Heart left ventricle (tissue), 16 donors: ENCODE measurements at regions of chr17 and their contacts with region 1.

Region 1: GRCh38 chr17:27455914-27456680 is at the start of gene KSR1:
- DNase-seq: peak; percentile 80 to 90 (median 84)
- ATAC-seq: peak; percentile 63 to 96 (median 90)
- H3K4me3 ChIP-seq: peak within 1 kb of the TSS; percentile 73 to 92 (median 82)
- H3K27ac ChIP-seq: peak within 1 kb of the TSS; percentile 59 to 89 (median 77)
- H3K4me1 ChIP-seq: peaks cover 0 to 36% (median 12%) of the 10 kb centered on the region in 12 donors
- H3K27me3 ChIP-seq: no peaks in the 10 kb centered on the region
- CTCF ChIP-seq: peak; percentile 22 to 68 (median 48)
- POLR2A ChIP-seq: peak in 1 of 2 donors; percentile 73
- total RNA-seq, gene KSR1: 6.1 to 31.1 (median 7.5) TPM

Region 2: DNA sequence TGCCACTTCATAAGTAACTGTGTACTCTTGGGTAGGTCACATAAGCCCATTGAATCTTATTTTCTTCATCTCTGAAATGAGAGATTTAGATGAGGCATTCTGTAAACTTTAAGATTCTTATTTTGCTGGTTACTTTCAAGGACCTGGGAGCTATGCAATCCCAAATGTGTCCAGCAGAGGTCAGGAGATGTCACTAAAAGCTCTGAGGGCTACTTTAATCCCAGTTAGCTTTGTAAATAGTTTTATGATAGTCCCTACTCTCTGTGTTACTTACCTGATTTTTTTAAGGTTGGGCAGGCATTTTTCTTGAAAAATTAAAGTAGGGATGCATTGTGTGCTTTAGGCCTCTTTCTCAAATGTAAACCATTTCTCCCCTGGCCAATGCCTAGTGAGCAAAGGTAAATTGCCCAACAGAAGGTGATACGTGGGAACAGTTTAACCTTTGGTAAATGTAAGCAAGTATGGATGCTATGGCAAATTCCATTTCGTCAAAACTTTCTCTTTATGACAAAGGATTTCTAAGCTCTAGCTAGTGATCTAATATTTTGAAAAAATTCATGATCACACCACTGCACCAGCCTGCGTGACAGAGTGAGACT is 219.3 kb before region 1 on chr17:
- intact Hi-C with region 1: loop called in 4 of 10 experiments (anchors 5 to 10 kb)
- DNase-seq: peak in 4 of 5 donors; percentile 60 to 81 (median 63)
- ATAC-seq: peak; percentile 41 to 81 (median 67)
- H3K4me3 ChIP-seq: no peak overlapping the region
- H3K27ac ChIP-seq: no peak overlapping the region
- H3K4me1 ChIP-seq: peaks cover 0 to 59% (median 0%) of the 10 kb centered on the region in 12 donors
- H3K27me3 ChIP-seq: no peaks in the 10 kb centered on the region
- CTCF ChIP-seq: peak; percentile 88 to 98 (median 94)
- POLR2A ChIP-seq: no peak

Region 3: GRCh38 chr17:27353461-27354050 is 102.5 kb before region 1 on chr17:
- intact Hi-C with region 1: loop called in 4 of 10 experiments (anchors 5 to 10 kb)
- DNase-seq: peak; percentile 95 to 97 (median 95)
- ATAC-seq: peak; percentile 92 to 97 (median 94)
- H3K4me3 ChIP-seq: peak overlapping the region; percentile 46 to 90 (median 66)
- H3K27ac ChIP-seq: peak overlapping the region; percentile 80 to 99 (median 96)
- H3K4me1 ChIP-seq: peaks cover 0 to 32% (median 21%) of the 10 kb centered on the region in 12 donors
- H3K27me3 ChIP-seq: no peaks in the 10 kb centered on the region
- CTCF ChIP-seq: peak; percentile 64 to 99 (median 98)
- POLR2A ChIP-seq: peak in 1 of 2 donors; percentile 81

Region 4: DNA sequence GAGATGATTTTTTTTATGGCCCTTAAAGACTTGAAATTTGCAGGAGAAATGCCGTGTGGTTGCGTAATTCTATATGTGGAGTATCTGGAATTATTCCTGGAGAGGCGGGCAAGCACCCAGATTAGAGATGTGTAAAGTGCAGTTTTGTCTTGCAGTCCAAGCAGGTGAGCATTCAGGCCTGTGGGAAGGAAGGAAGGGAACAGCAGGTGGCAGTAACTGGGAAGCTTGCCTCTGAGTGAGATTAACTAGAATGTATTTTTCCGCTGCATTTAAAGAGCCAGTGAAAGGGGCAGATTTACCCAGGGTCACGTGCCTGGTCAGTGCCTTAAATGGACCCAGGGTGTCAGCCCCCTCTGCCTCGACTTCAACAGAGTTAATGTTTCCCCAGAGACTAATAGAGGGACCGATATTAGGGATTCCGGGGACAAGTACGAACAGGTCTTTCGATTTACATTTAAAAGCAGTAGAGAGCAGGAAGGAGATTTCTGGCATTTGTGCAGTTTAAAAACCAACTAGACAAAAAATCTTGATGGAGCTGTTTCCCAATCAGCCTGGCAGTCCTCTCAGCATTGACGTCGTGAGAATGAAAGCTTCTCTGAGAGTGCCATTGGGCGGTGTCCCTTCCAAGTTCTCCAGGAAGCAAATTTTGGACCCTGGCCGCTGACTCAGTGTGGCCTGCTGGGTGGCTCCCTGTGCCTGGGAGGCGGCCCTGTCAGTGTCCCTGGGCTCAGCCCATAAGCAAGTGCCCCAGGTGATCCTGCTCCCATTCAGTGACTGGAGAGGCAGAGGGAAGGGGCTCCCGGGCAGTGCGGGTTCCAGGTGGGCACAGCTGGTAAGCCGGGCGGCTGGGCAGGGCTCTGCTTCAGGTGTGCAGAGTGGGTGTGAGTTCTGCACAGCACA is 38.3 kb after region 1 on chr17:
- intact Hi-C with region 1: loop called in 2 of 10 experiments (anchors 2 to 5 kb)
- DNase-seq: peak; percentile 21 to 79 (median 66)
- ATAC-seq: peak; percentile 41 to 89 (median 78)
- H3K4me3 ChIP-seq: peak overlapping the region in 2 of 12 donors; percentile 19 to 24
- H3K27ac ChIP-seq: peak overlapping the region in 5 of 12 donors; percentile 3 to 76 (median 29)
- H3K4me1 ChIP-seq: peaks cover 0 to 37% (median 14%) of the 10 kb centered on the region in 12 donors
- H3K27me3 ChIP-seq: no peaks in the 10 kb centered on the region
- CTCF ChIP-seq: peak in 8 of 12 donors; percentile 19 to 49 (median 36)
- POLR2A ChIP-seq: no peak

Region 5: GRCh38 chr17:27559506-27560481 is 103.7 kb after region 1 on chr17:
- intact Hi-C with region 1: loop called in 3 of 10 experiments (anchors 10 kb)
- DNase-seq: peak; percentile 77 to 90 (median 83)
- ATAC-seq: peak; percentile 82 to 96 (median 94)
- H3K4me3 ChIP-seq: peak overlapping the region in 11 of 12 donors; percentile 12 to 52 (median 38)
- H3K27ac ChIP-seq: peak overlapping the region in 11 of 12 donors; percentile 62 to 88 (median 80)
- H3K4me1 ChIP-seq: peaks cover 5 to 64% (median 25%) of the 10 kb centered on the region in 12 donors
- H3K27me3 ChIP-seq: no peaks in the 10 kb centered on the region
- CTCF ChIP-seq: peak in 5 of 12 donors; percentile 8 to 26 (median 19)
- POLR2A ChIP-seq: no peak

Region 6: DNA sequence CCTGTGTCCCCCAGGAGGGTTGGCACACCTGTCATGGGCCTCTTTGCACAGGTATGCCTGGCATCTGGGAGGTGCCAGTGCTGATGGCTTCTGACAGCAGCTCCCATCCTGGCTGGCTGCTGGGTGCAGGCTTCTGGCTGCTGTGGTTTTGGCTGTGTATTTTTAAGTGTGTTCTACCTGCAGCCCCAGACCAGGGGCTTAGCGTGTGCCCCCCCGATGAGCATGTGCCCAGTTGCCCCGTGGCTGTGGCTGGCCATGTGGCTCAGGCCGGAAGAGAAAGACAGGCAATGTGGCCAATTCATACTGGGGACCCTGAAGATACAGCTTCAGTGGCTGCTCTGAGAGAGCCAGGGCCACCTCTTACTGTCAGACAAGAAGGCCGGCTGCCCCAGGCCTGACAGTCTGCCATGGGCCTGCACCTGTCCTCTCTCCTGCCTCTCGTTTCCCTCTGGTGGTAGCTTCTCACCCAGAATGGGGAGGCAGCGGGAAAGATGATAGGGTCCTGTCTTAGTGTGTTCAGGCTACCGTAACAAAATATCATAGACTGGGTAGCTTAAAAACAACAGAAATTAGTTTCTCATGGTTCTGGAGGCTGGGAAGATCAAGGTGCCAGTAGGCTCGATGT is 137.2 kb after region 1 on chr17:
- intact Hi-C with region 1: loop called in 4 of 10 experiments (anchors 5 to 10 kb)
- DNase-seq: no peak
- ATAC-seq: no peak
- H3K4me3 ChIP-seq: no peak overlapping the region
- H3K27ac ChIP-seq: no peak overlapping the region
- H3K4me1 ChIP-seq: peaks cover 0 to 6% (median 0%) of the 10 kb centered on the region in 12 donors
- H3K27me3 ChIP-seq: no peaks in the 10 kb centered on the region
- CTCF ChIP-seq: no peak
- POLR2A ChIP-seq: no peak

Region 7: DNA sequence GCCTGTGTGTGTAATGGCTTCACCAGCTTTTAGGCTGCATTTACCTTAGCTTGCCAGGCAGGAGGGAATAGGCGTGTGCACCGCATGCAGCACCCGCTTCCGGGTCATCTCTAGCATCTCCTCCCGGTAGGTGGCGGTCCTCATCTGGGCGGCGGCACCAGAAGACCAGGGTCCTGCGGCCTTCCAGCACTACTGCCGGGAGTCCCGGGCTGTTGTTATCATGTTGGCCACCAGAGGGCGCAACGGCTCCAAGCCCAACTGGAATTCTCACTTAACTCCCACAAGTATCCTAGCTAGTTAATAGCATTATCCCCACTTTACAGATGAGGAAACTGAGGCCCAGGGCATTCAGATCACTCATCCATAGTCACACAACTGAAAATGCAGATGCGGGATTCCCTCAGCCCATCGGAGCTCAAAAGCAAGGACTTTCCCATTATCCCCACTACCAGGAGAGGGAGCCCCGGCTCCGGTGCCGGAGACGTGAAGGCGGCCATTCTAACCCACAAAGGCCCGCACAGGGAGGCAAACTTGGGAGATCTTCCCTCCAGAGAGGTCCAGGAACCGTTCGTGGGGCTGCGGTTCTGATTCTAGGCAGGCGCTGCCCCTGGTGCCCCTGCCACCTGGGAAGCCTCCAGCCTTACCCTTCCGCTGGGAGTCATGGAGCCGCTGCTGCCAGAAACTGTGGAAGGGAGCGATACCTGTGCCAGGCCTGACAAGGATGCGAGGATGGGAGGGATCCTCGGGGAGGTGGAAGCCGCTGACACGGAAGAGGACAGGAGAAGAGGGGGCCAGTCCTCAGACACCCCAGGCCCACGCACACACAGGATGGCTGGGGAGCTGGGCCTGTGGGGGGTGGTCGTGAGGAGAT is 198.8 kb after region 1 on chr17:
- intact Hi-C with region 1: loop called in 1 of 10 experiments (anchors 5 kb)
- DNase-seq: peak; percentile 50 to 82 (median 69)
- ATAC-seq: peak in 3 of 4 donors; percentile 35 to 46 (median 40)
- H3K4me3 ChIP-seq: no peak overlapping the region
- H3K27ac ChIP-seq: no peak overlapping the region
- H3K4me1 ChIP-seq: peaks cover 0 to 5% (median 0%) of the 10 kb centered on the region in 12 donors
- H3K27me3 ChIP-seq: no peaks in the 10 kb centered on the region
- CTCF ChIP-seq: peak; percentile 83 to 99 (median 92)
- POLR2A ChIP-seq: no peak